Left cardiac atrium (tissue), 4 donors: ENCODE measurements at regions of chr6 and their contacts with region 1.

Region 1: GRCh38 chr6:44172731-44173500 is 14.3 kb downstream of the CAPN11 start:
- DNase-seq: peak; percentile 89
- ATAC-seq: peak; percentile 93 to 96

Region 2: GRCh38 chr6:44219053-44219814 is 46.3 kb after region 1 on chr6:
- intact Hi-C with region 1: loop called in 1 of 2 experiments (anchors 5 kb)
- DNase-seq: peak; percentile 91
- ATAC-seq: peak; percentile 68 to 81

Region 3: DNA sequence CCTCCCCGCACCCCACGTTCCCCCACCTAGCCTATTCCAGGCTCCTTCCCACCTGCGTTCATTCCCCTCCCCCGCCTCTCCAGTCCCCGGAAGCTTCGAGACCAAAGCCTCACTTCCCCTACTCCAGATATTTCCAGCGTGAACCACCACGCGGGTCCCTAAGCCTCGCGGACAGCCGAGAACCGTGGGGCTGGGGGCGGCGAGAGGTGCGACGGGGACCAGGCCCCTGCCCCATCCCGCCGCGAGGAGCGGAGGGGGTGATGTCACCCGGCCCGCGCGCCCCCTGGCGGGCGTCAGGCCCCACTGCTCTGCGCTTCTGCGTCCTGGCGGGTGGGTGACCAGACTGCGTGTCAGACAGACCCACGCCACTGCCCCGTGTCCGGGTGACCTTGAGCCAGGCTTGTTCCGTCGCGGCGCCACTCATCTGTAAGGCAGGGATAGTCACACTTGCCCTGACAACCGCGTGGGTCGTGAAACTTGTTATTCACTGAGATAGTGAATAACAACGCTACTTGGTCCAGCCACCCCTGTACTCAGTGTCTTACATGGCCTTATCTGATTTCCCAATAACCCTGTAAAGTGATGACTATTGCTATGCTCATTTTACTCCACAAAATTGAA is 65.0 kb after region 1 on chr6:
- intact Hi-C with region 1: loop called (anchors 2 to 5 kb)
- DNase-seq: peak; percentile 83
- ATAC-seq: peak; percentile 80 to 86

Region 4: DNA sequence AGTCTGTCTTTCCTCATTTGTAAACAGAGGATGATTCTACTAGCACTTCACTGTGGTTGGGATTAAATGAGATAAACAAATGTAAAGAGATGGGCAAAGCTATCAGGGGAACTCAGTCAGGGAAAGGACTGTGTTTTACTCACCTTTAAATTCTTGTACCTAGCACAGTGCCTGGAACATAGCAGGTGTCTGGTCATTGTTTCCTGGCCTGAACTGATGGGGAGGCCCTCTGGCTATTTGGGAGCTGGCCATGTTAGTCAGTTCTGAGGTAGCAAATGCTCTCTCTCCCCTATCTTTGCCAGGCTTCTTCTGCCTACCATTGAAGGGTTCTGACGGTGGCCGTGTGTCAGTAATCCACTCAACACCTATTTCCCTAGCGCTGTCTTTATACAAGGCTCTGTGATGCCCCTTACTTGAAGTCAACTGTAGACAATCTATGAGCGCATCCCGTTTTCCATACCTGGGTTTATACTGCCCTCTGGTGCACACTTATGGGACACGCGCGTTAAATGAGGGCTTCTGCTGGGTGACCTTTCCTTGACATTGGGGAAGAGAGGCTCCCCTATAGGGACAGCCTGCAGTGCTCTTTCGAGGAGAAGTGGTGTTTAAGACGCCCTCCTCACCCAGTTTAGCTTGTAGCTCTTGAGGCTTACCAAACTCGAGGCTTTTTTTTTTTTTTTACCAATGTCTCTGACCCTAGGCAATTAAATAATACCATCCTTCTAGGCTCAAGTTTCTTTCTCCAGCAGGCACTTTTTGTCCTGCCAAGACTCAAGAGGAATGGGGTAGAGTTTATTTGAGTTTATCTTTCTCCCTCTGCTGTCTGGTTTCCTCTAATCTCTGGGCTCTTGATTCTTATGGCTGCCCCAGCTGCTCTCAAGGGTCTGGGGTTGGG is 165.6 kb after region 1 on chr6:
- intact Hi-C with region 1: loop called in 1 of 2 experiments (anchors 10 kb)
- DNase-seq: peak; percentile 38
- ATAC-seq: peak; percentile 61 to 77

Region 5: DNA sequence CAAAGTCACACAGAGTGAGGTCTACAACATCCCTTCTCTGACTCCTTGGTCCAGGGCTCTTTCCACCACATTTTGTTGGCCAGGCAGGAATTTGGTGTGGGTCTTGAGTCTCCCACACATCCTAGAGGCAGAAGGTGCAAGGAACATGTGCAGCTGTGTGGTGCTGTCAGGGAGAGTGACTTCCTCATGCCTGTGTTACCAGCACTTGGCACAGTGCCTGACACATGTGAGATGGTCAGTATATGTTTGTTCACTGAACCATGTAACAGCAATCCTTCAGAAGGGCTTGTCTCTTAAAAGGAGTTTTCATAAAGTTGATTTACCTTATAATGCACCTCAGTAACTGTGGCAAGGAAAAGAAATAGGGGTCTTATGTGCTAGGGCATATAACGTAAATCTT is 383.1 kb after region 1 on chr6:
- intact Hi-C with region 1: no loop called
- DNase-seq: no peak
- ATAC-seq: no peak